ENCODE measurements at regions of chrX and their contacts with region 1.

Region 1: GRCh38 chrX:104253567-104254441 is 929 bp downstream of the ESX1 start:
- DNase-seq: no peak
- H3K4me3 ChIP-seq: peak overlapping the region in 2 of 3 donors; percentile 29 to 55
- H3K27ac ChIP-seq: no peak overlapping the region
- H3K4me1 ChIP-seq: no peaks in the 10 kb centered on the region
- H3K27me3 ChIP-seq: peaks cover 3 to 85% of the 10 kb centered on the region in 2 donors
- CTCF ChIP-seq: no peak
- POLR2A ChIP-seq: no peak

Region 2: DNA sequence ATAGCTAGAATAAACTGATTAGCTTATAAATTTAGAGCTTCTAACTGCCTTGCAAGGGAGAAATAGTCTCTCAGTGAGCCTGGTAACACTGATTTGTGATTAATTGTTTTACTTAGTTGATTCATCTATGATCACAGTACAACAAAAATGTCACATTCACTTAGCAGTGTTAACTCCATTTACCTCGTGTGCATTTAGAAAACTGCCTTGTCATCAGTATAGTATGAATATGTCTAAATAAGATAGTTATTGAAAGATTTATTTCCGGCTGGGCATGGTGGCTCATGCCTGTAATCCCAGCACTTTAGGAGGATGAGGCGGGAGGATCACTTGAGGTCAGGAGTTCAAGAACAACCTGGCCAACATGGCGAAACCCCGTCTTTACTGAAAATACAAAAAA is 48.3 kb before region 1 on chrX:
- intact Hi-C with region 1: no loop called
- DNase-seq: no peak
- H3K4me3 ChIP-seq: no peak overlapping the region
- H3K27ac ChIP-seq: no peak overlapping the region
- H3K4me1 ChIP-seq: no peaks in the 10 kb centered on the region
- H3K27me3 ChIP-seq: peaks cover 0 to 37% of the 10 kb centered on the region in 2 donors
- CTCF ChIP-seq: no peak
- POLR2A ChIP-seq: no peak

Region 3: GRCh38 chrX:105816517-105816916 is 1562.7 kb after region 1 on chrX:
- intact Hi-C with region 1: loop called (anchors 5 kb)
- DNase-seq: no peak
- H3K4me3 ChIP-seq: no peak overlapping the region
- H3K27ac ChIP-seq: no peak overlapping the region
- H3K4me1 ChIP-seq: no peaks in the 10 kb centered on the region
- H3K27me3 ChIP-seq: peaks cover 0 to 83% of the 10 kb centered on the region in 2 donors
- CTCF ChIP-seq: no peak
- POLR2A ChIP-seq: no peak

Measured in breast epithelium (tissue), 4 donors.